GM10248 (cell line): ENCODE measurements at regions of chr5 and their contacts with region 1.

Region 1: DNA sequence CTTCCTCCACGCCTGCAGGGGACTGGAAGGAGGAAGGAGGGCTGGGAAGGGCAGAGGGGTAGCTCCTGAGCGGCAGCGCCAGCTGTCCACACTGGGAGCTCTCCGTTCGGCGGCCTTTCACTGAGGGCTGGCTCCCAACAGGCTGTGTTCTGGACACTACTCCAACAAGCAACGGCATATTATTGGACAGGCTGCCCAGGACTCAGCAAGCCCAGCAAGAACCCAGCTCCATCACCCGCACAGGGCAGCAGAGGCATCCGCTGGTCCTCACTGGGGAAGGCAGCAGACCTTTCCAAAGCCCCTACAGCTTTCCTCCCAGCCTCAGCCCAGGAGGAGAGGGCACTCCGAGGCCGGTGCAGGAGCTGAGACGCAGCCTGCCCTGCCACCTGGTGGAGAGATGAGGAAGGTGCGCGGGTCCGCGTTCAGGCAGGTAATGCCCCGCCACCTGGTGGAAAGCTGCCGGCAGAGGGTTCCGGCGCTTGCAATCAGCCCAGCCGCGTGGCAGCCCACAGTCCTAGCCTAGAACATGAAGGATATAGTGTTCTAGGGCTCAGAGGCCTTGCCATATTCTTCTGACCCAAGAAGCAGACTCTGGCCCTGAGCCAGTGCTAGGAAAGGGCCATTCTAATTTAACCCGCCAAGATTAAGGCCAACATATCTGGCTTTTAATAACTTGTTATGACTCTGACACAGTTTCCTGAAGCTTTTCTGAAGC is 74.4 kb downstream of the NRG2 start:
- DNase-seq: peak; percentile 90
- CTCF ChIP-seq: peak; percentile 100

Region 2: GRCh38 chr5:139774980-139775661 is 193.6 kb before region 1 on chr5:
- CTCF ChIA-PET with region 1: interaction called, 125 read pairs
- POLR2A ChIA-PET with region 1: no interaction called
- DNase-seq: peak; percentile 88
- CTCF ChIP-seq: peak; percentile 88

Region 3: GRCh38 chr5:139814675-139815280 is 153.9 kb before region 1 on chr5:
- CTCF ChIA-PET with region 1: interaction called, 10 read pairs
- POLR2A ChIA-PET with region 1: no interaction called
- DNase-seq: no peak
- CTCF ChIP-seq: no peak

Region 4: DNA sequence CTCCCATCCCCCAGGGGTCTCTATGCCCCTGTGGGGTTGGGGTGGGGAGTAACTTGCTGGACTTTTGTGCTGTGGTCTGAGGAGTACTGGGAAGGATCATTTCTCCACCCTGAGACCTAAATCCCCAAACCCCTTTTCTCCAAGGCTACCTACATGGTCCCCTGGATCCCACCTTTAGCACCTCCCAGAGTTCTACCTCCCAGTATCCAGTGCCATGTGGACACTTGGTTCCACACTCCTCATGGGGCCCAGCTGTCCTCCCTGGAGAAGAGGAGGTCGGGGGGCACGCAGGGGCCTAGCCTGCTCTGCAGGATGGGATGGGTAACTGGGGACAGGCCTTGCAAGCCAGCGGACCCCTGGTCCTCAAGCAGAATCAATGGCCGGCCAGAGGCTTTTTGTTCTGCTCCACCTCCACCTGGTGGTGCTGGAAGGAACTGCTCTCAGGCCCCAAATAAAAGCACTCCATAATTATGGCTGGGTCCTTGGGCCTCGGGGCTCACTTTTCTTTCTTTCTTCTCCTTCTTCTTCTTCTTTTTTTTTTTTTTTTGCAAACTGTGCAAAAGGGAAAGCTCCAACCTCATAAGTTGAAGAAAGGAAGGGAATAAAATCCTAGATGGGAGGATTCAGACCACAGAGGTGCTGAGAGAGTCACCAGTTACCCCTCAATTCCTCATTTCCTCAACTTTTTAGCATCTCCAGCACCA is 104.7 kb before region 1 on chr5:
- CTCF ChIA-PET with region 1: interaction called, 38 read pairs
- POLR2A ChIA-PET with region 1: no interaction called
- DNase-seq: peak; percentile 84
- CTCF ChIP-seq: peak; percentile 74

Region 5: GRCh38 chr5:139903795-139904565 is 64.7 kb before region 1 on chr5:
- CTCF ChIA-PET with region 1: interaction called, 80 read pairs
- POLR2A ChIA-PET with region 1: no interaction called
- DNase-seq: peak; percentile 52
- CTCF ChIP-seq: no peak

Region 6: DNA sequence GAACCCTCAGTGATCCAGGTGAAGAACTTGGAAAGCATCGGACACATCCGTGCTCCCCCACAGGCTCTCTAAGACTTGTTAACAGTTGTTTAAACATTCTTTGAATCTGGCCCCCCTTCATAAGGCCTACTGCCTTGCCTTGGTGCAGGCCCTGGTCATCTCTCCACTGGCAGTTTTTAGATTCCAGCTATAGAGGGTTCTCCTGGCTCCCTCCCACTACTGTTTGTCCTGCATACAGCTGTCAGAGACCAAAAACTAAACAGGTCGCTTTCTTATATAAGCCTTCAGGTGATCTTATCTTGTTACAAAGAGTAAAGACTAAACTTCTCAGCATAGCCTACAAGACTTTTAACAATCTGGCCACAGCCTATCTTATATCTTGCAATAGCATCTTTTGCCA is 42.1 kb after region 1 on chr5:
- CTCF ChIA-PET with region 1: interaction called, 403 read pairs
- POLR2A ChIA-PET with region 1: interaction called, 3 read pairs
- DNase-seq: no peak
- CTCF ChIP-seq: no peak

Region 7: GRCh38 chr5:140042643-140043500 is 74.2 kb after region 1 on chr5 and contains the start of gene NRG2:
- CTCF ChIA-PET with region 1: interaction called, 24 read pairs
- POLR2A ChIA-PET with region 1: no interaction called
- DNase-seq: peak; percentile 75
- CTCF ChIP-seq: peak; percentile 63